ENCODE measurements at regions of chr14 and their contacts with region 1.

Region 1: DNA sequence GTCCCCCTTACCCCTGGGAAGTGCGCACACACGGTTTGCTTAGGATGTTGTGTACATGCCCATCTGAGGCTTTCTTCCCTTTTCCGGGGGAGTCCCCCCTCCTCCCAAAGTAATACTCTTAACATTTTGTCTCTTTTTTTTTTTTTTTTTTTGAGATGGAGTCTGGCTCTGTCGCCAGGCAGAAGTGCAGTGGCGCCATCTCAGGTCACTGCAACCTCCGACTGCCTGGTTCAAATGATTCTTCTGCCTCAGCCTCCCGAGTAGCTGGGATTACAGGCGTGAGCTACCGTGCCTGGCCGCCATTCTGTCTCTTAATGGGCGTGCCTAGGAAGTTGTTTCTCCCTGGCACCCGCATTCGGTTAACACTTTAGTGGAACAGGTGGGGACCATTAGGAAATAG is 4.5 kb upstream of the GMFB start:
- DNase-seq: no peak
- H3K4me3 ChIP-seq: no peak overlapping the region
- H3K27me3 ChIP-seq: no peaks in the 10 kb centered on the region
- CTCF ChIP-seq: no peak

Region 2: DNA sequence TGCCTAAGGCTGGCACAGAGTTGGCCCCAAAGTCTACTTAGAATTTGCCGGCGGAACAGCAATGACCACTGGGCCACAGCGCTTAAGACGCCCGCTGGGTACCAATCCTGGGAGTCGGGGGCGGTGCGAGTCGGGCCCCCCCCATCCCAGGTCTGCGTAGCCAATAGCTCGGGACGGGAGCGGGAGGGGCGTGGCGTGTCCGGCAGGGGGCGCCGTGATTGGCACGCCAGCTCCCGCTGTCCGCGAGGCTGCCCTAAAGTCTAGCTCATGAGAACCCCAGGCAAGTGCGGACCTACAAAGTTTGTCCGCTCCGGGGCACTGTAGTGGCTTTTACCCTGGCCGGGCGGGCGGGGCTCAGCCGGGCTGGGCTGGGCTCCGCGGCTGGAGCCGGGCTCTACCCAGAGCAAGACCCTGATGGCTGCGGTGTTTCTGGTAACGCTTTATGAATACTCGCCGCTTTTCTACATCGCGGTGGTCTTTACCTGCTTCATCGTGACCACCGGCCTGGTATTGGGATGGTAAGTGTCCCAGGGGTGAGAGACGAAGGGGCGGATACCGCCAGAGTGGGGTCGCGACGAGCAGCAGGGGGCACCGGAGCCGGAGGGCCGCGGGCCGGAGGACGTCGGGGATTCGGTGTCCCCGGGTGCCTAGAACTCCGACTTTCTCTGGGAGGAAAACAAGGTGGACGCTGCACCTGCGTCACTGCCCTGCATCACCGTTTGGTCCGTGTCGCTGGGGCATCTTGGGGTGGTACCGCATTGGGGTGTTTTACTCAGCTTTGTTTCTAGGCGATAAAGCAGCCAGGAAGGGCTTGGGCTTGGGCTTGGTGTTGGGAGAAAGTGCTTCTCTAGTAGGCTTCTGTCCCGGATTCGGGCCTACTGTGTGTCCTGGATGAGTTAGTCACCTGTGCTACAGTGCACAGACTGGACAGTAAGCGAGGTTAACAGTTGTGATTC is 16.5 kb after region 1 on chr14 and contains the start of gene CGRRF1:
- CTCF ChIA-PET with region 1: interaction called, 5 read pairs
- POLR2A ChIA-PET with region 1: interaction called, 17 read pairs
- DNase-seq: peak; percentile 89
- H3K4me3 ChIP-seq: peak within 1 kb of the TSS; percentile 77
- H3K27me3 ChIP-seq: no peaks in the 10 kb centered on the region
- CTCF ChIP-seq: peak; percentile 58
- polyA plus RNA-seq, gene CGRRF1: 7.5 and 11.4 TPM in 2 replicates

Measured in BJ (cell line).